Psoas muscle (tissue), 8 donors: ENCODE measurements at regions of chr10 and their contacts with region 1.

Region 1: DNA sequence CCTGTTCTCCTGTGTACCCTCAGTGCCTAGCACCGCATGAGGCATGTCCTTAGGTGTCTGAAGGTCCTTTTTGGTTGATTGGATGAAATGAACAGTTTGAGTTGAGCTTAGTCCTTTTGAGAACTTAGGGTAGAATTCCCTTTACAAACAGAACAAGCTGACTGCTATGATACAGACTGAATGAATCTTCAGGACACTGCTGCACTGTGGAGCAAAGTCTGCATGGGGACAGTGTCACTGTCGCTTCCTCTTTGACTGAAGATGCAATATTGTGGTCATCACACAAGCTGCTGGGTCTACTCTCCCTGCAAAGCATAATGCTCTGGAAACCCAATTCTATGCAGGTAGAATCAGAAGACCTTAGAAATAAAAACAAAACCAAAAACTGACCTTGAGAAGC is 8.6 kb upstream of the PLAU start:
- DNase-seq: no peak
- ATAC-seq: no peak
- H3K4me3 ChIP-seq: no peak overlapping the region
- H3K27ac ChIP-seq: no peak overlapping the region
- H3K4me1 ChIP-seq: peaks cover 19% of the 10 kb centered on the region
- H3K27me3 ChIP-seq: no peaks in the 10 kb centered on the region
- CTCF ChIP-seq: no peak

Region 2: GRCh38 chr10:73940634-73941221 is 38.4 kb after region 1 on chr10:
- intact Hi-C with region 1: loop called in 1 of 2 experiments (anchors 5 kb)
- DNase-seq: peak; percentile 90 to 95
- ATAC-seq: peak; percentile 92 to 97 (median 94)
- H3K4me3 ChIP-seq: peak overlapping the region; percentile 13
- H3K27ac ChIP-seq: peak overlapping the region; percentile 93
- H3K4me1 ChIP-seq: peaks cover 19% of the 10 kb centered on the region
- H3K27me3 ChIP-seq: no peaks in the 10 kb centered on the region
- CTCF ChIP-seq: peak; percentile 93